Heart left ventricle (tissue), 16 donors: ENCODE measurements at regions of chr1 and their contacts with region 1.

Region 1: GRCh38 chr1:225652729-225653462 is at the start of gene ENAH:
- DNase-seq: peak; percentile 88 to 91 (median 89)
- ATAC-seq: peak; percentile 68 to 93 (median 87)
- H3K4me3 ChIP-seq: peak within 1 kb of the TSS; percentile 80 to 99 (median 92)
- H3K27ac ChIP-seq: peak within 1 kb of the TSS; percentile 92 to 100 (median 96)
- H3K4me1 ChIP-seq: peaks cover 0 to 65% (median 37%) of the 10 kb centered on the region in 12 donors
- H3K27me3 ChIP-seq: peaks cover 0 to 6% (median 0%) of the 10 kb centered on the region in 9 donors
- CTCF ChIP-seq: no peak
- POLR2A ChIP-seq: peak; percentile 28 to 54
- total RNA-seq, gene ENAH: 54.3 to 183 (median 97.6) TPM

Region 2: GRCh38 chr1:225508538-225509375 is 144.1 kb before region 1 on chr1:
- intact Hi-C with region 1: loop called in 1 of 10 experiments (anchors 10 kb)
- DNase-seq: peak in 4 of 5 donors; percentile 33 to 50 (median 40)
- ATAC-seq: peak; percentile 99
- H3K4me3 ChIP-seq: no peak overlapping the region
- H3K27ac ChIP-seq: peak overlapping the region; percentile 1 to 86 (median 77)
- H3K4me1 ChIP-seq: peaks cover 0 to 26% (median 14%) of the 10 kb centered on the region in 12 donors
- H3K27me3 ChIP-seq: no peaks in the 10 kb centered on the region
- CTCF ChIP-seq: no peak
- POLR2A ChIP-seq: no peak

Region 3: GRCh38 chr1:225567590-225568194 is 85.2 kb before region 1 on chr1:
- intact Hi-C with region 1: loop called in 3 of 10 experiments (anchors 10 kb)
- DNase-seq: no peak
- ATAC-seq: no peak
- H3K4me3 ChIP-seq: no peak overlapping the region
- H3K27ac ChIP-seq: no peak overlapping the region
- H3K4me1 ChIP-seq: peaks cover 0 to 46% (median 2%) of the 10 kb centered on the region in 12 donors
- H3K27me3 ChIP-seq: no peaks in the 10 kb centered on the region
- CTCF ChIP-seq: peak in 5 of 12 donors; percentile 9 to 41 (median 22)
- POLR2A ChIP-seq: no peak

Region 4: GRCh38 chr1:225612287-225612686 is 40.6 kb before region 1 on chr1:
- intact Hi-C with region 1: loop called in 1 of 10 experiments (anchors 5 kb)
- DNase-seq: no peak
- ATAC-seq: no peak
- H3K4me3 ChIP-seq: no peak overlapping the region
- H3K27ac ChIP-seq: peak overlapping the region in 1 of 12 donors; percentile 80
- H3K4me1 ChIP-seq: peaks cover 0 to 31% (median 12%) of the 10 kb centered on the region in 12 donors
- H3K27me3 ChIP-seq: no peaks in the 10 kb centered on the region
- CTCF ChIP-seq: no peak
- POLR2A ChIP-seq: no peak

Region 5: DNA sequence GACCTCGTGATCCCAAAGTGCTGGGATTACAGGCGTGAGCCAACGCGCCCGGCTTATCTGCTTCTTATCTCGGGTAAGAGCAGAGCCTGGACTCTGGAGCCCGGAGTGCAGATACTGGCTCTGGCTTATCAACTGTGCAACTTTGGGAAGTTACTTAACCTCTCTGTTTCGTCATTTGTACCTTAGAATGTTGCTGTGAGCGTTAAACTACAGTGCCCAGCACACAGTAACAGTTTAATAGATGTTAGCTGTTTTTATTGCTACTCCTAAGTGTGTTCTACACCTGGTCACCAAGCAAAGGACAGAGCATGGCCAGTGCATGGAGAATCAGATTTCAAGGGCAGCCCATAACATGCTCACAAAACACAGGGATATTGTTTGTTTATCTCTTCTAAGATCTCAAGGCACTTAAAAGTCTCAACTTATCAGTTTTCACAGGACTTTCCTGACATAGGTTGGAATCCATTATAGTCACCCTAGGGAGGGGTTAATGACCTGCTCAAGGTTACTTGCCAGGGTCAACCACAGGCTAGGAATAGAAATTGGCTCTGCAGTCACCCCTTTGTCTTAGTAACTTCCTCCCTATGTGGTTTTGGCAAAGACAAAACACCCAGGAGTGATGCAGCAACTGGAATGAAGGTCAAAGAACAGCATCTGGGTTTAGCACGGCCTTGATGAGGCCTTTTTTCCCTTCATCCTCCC is 102.2 kb after region 1 on chr1:
- intact Hi-C with region 1: loop called in 2 of 10 experiments (anchors 5 kb)
- DNase-seq: peak; percentile 48 to 74 (median 64)
- ATAC-seq: peak; percentile 81 to 93 (median 88)
- H3K4me3 ChIP-seq: no peak overlapping the region
- H3K27ac ChIP-seq: peak overlapping the region; percentile 53 to 92 (median 76)
- H3K4me1 ChIP-seq: peaks cover 0 to 71% (median 43%) of the 10 kb centered on the region in 12 donors
- H3K27me3 ChIP-seq: no peaks in the 10 kb centered on the region
- CTCF ChIP-seq: no peak
- POLR2A ChIP-seq: no peak

Region 6: DNA sequence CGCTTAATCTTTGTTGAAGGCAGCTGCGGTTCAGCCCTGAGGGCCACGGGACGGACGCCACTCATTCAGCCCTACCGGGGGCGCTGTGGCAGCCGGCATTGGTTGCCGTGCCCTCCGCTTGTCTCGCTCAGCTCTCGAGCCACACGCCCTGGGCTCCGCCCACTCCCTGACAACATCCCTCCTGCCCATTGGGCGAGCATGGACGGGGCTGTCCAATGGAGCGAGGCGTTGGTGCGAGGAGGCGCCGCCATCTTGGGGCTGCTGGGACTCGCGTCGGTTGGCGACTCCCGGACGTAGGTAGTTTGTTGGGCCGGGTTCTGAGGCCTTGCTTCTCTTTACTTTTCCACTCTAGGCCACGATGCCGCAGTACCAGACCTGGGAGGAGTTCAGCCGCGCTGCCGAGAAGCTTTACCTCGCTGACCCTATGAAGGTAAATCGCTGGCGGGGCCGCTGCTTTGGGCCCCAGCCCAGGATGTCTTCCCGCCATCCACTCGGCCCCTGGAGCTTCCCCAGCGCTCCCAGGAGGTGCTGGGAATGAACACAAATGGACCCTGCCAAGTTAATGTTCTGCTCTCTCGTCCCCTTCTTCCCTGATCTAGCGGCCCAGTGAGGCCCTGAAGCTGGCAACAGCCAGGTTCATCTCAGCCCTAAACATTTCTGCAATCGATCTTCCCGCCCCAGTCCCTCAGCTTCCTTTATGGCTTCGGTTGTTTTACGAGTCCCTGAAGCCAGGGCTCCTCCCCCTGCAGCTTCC is 124.9 kb after region 1 on chr1 and contains the start of gene SRP9:
- intact Hi-C with region 1: loop called in 5 of 10 experiments (anchors 2 to 5 kb)
- DNase-seq: peak; percentile 99 to 100 (median 100)
- ATAC-seq: peak; percentile 100
- H3K4me3 ChIP-seq: peak within 1 kb of the TSS; percentile 49 to 99 (median 78)
- H3K27ac ChIP-seq: peak within 1 kb of the TSS; percentile 85 to 97 (median 92)
- H3K4me1 ChIP-seq: peaks cover 0 to 65% (median 43%) of the 10 kb centered on the region in 12 donors
- H3K27me3 ChIP-seq: no peaks in the 10 kb centered on the region
- CTCF ChIP-seq: peak; percentile 75 to 98 (median 91)
- POLR2A ChIP-seq: peak in 1 of 2 donors; percentile 77
- total RNA-seq, gene SRP9: 151 to 187 (median 171) TPM